ENCODE measurements at regions of chr14 and their contacts with region 1.

Region 1: DNA sequence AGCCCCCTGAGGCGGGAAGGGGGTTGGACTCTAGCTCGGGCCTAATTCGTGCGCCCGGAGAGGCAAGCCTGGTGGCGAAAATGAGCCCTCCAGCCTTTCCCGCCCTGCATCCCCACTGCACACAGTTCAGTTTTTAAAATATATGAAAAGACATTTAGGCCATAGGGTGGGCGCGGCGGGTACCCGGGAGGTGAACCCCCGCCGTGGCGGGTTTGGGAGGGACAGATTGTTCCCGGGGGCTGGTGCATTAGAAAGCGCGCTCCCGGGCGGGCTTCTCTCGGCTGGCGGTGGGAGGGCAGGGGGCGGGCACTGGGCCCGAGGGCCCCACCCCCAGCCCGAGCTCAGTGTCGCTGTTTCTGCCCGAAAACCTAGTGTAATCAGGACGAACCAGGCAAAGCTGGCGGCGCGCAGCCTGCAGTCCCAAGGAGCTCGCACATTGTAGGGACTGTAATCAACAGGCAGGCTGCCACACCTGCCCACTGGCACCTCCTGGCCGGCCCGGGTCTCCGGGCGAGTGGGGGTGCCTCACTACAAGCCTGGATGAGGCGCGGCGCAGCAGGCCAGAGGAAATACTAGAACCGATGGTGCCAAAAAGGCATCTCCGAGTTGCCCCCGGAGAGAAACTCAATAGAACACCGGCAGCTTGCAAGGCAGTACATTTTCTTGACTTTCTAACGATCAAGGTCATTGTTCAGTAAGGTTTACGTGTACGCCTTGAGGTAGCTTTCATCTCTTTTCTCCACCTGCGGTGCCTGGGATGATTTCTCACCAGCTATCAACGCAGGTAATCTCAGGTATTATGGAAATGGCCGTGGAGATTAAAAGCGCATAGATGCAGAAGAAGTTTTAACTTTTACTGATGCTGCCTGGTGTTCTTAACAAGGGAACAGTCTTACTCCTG is 764 bp upstream of the SPTB start:
- DNase-seq: peak; percentile 33 to 58 (median 44)
- H3K4me3 ChIP-seq: peak overlapping the region; percentile 54
- H3K4me3 Mint-ChIP-seq: peak overlapping the region; percentile 71 to 92 (median 86)
- H3K27ac ChIP-seq: no peak overlapping the region
- H3K27ac Mint-ChIP-seq: peak overlapping the region in 1 of 8 donors; percentile 43
- H3K4me1 ChIP-seq: peaks cover 6% of the 10 kb centered on the region
- H3K4me1 Mint-ChIP-seq: peaks cover 8 to 13% (median 9%) of the 10 kb centered on the region in 3 donors
- H3K27me3 ChIP-seq: peaks cover 10% of the 10 kb centered on the region
- H3K27me3 Mint-ChIP-seq: peaks cover 35 to 63% of the 10 kb centered on the region in 2 donors

Region 2: GRCh38 chr14:64870160-64870559 is 10.3 kb before region 1 on chr14:
- CTCF ChIA-PET with region 1: interaction called, 10 read pairs
- POLR2A ChIA-PET with region 1: no interaction called
- DNase-seq: no peak
- H3K4me3 ChIP-seq: no peak overlapping the region
- H3K4me3 Mint-ChIP-seq: no peak overlapping the region
- H3K27ac ChIP-seq: no peak overlapping the region
- H3K27ac Mint-ChIP-seq: peak overlapping the region in 1 of 8 donors; percentile 4
- H3K4me1 ChIP-seq: no peaks in the 10 kb centered on the region
- H3K4me1 Mint-ChIP-seq: no peaks in the 10 kb centered on the region
- H3K27me3 ChIP-seq: no peaks in the 10 kb centered on the region
- H3K27me3 Mint-ChIP-seq: peaks cover 18 to 57% of the 10 kb centered on the region in 2 donors

Measured in CD8-positive, alpha-beta memory T cell (primary cell).